ENCODE measurements at regions of chr1 and their contacts with region 1.

Region 1: DNA sequence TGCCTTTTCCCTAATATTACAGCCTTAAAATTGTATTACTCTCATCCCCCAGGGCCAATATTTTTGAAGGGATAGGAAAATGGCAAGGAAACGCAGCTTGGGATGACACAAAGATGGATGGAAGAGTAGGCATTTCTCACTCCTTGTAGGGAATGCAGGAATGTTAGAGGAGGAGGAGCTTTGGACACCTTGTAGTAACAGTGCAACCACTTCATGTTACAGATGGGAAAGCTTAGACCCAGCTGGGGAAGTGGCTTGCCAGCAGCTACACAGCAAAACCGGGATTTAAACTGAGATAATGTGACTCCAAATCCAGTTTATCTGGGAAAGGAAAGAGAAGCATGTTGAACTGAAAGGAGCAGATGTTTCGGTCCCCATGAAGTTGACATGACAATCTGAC is 473.7 kb upstream of the DAB1 start:
- DNase-seq: no peak
- H3K4me3 ChIP-seq: no peak overlapping the region
- CTCF ChIP-seq: no peak

Region 2: GRCh38 chr1:57124768-57125446 is 772.7 kb before region 1 on chr1:
- in situ Hi-C with region 1: no loop called
- DNase-seq: no peak
- H3K4me3 ChIP-seq: no peak overlapping the region
- CTCF ChIP-seq: no peak

Region 3: DNA sequence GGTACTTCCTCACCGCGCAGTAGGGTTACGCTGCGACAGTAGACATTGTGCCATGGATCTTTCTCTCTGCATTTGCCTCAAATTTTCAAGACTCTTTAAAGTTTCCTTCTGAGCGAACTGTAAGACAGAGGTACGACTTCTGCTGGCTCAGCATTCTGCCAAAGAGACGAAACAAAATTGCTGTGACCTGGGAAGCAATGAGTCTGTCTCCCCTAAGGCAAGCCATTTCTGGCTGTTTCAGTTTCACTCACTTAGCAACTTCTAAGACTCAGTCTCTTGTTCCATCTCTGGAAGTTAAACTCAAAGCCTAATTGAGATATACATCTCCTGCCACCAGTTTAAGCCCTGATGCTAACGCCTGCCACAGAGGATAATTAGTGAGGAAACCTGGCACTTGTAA is 37.2 kb after region 1 on chr1:
- in situ Hi-C with region 1: loop called (anchors 5 kb)
- DNase-seq: no peak
- H3K4me3 ChIP-seq: no peak overlapping the region
- CTCF ChIP-seq: no peak

Region 4: GRCh38 chr1:57986432-57986831 is 88.9 kb after region 1 on chr1:
- in situ Hi-C with region 1: no loop called
- DNase-seq: no peak
- H3K4me3 ChIP-seq: no peak overlapping the region
- CTCF ChIP-seq: no peak

Measured in astrocyte of the cerebellum (primary cell).